SK-N-SH (cell line): ENCODE measurements at regions of chr7 and their contacts with region 1.

Region 1: DNA sequence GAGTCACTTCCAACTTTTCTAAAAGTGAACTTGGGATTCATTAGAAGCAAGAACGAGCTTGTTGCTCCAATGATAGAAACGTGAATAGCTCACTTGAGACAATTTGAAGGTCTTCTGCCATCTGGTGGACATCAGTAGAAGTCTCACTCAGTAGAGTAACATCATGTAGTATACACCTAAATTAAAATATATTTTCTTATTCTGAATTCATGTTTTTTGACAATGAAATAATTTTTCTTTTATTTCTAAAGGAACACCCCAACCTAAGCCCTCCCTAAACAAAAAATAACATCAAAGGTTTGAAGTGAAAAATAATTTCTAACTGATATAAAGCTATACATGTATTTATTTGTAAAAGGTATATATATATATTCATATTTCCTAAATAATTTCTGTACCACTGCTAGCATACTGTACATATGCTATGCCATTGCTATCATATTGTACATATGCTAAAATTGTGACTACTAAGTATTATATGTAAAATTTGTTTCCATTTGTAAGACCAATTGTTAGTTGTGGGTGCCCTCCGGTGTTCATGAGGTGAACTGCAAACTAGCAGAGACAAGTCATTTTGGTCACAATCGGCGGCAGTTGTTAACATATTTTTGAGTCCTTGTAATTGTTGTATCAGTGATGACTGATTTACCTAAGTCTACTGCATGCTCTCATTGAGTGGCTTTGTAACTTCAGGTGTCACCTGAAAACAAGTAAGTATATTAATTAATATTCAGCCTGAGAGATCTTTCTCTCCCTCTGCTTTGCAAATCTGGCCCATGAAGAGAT is 121.9 kb downstream of the PTPRZ1 start:
- DNase-seq: peak; percentile 56
- H3K4me3 ChIP-seq: no peak overlapping the region; a peak in 1 of 4 replicates
- H3K27ac ChIP-seq: no peak overlapping the region
- H3K4me1 ChIP-seq: no peaks in the 10 kb centered on the region; a peak in 1 of 4 replicates
- H3K27me3 ChIP-seq: peaks cover 24% of the 10 kb centered on the region; the same call in 1 of the 2 replicates
- CTCF ChIP-seq: peak; percentile 92
- EP300 ChIP-seq: no peak
- RAD21 ChIP-seq: peak; percentile 90

Region 2: GRCh38 chr7:121366852-121367431 is 627.9 kb before region 1 on chr7:
- CTCF ChIA-PET with region 1: interaction called, 15 read pairs
- POLR2A ChIA-PET with region 1: no interaction called
- DNase-seq: peak; percentile 41
- H3K4me3 ChIP-seq: no peak overlapping the region
- H3K27ac ChIP-seq: peak overlapping the region; percentile 12 to 26; a peak in 3 of 4 replicates
- H3K4me1 ChIP-seq: peaks cover 0 to 22% of the 10 kb centered on the region in 2 experiments; a peak in 3 of 4 replicates
- H3K27me3 ChIP-seq: no peaks in the 10 kb centered on the region
- CTCF ChIP-seq: peak; percentile 99
- EP300 ChIP-seq: no peak
- RAD21 ChIP-seq: peak; percentile 94

Region 3: DNA sequence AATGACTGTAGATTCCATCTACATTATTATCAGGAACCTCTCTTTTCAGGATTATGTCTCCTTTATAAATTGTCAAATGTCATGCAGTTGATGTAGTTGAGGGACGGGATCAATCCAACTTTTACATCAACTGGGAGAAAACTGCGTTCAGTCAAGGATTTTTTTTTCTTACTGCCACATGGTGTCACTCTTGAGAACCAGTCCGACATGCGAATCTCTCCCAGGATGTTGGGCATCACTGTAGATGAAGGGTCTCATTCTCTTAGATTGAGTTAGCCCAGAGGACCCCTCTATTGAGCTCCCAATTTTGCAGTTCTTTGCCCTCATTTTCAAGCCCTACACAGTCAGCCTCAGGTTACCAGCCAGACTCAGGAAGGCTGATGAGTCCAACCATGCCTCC is 242.1 kb before region 1 on chr7:
- CTCF ChIA-PET with region 1: interaction called, 31 read pairs
- POLR2A ChIA-PET with region 1: no interaction called
- DNase-seq: peak; percentile 2
- H3K4me3 ChIP-seq: no peak overlapping the region
- H3K27ac ChIP-seq: no peak overlapping the region
- H3K4me1 ChIP-seq: no peaks in the 10 kb centered on the region
- H3K27me3 ChIP-seq: peaks cover 6% of the 10 kb centered on the region; the same call in 1 of the 2 replicates
- CTCF ChIP-seq: peak; percentile 58
- EP300 ChIP-seq: no peak
- RAD21 ChIP-seq: peak; percentile 52

Region 4: GRCh38 chr7:121891731-121892130 is 103.1 kb before region 1 on chr7:
- CTCF ChIA-PET with region 1: no interaction called
- POLR2A ChIA-PET with region 1: no interaction called
- DNase-seq: no peak
- H3K4me3 ChIP-seq: no peak overlapping the region
- H3K27ac ChIP-seq: no peak overlapping the region
- H3K4me1 ChIP-seq: no peaks in the 10 kb centered on the region
- H3K27me3 ChIP-seq: no peaks in the 10 kb centered on the region; the same call in 1 of the 2 replicates
- CTCF ChIP-seq: no peak
- EP300 ChIP-seq: no peak
- RAD21 ChIP-seq: no peak

Region 5: GRCh38 chr7:121966276-121966934 is 28.4 kb before region 1 on chr7:
- CTCF ChIA-PET with region 1: interaction called, 19 read pairs
- POLR2A ChIA-PET with region 1: no interaction called
- DNase-seq: no peak
- H3K4me3 ChIP-seq: no peak overlapping the region
- H3K27ac ChIP-seq: no peak overlapping the region
- H3K4me1 ChIP-seq: no peaks in the 10 kb centered on the region; a peak in 1 of 4 replicates
- H3K27me3 ChIP-seq: peaks cover 15% of the 10 kb centered on the region; the same call in 1 of the 2 replicates
- CTCF ChIP-seq: no peak
- EP300 ChIP-seq: no peak
- RAD21 ChIP-seq: no peak

Region 6: GRCh38 chr7:122013071-122013470 is 18.3 kb after region 1 on chr7:
- CTCF ChIA-PET with region 1: interaction called, 15 read pairs
- POLR2A ChIA-PET with region 1: no interaction called
- DNase-seq: no peak
- H3K4me3 ChIP-seq: no peak overlapping the region
- H3K27ac ChIP-seq: no peak overlapping the region
- H3K4me1 ChIP-seq: no peaks in the 10 kb centered on the region
- H3K27me3 ChIP-seq: peaks cover 18% of the 10 kb centered on the region
- CTCF ChIP-seq: no peak
- EP300 ChIP-seq: no peak
- RAD21 ChIP-seq: no peak